Cardiac septum (tissue), 1 donor: ENCODE measurements at regions of chr3 and their contacts with region 1.

Region 1: GRCh38 chr3:21839592-21839991 is 88.6 kb upstream of the ZNF385D start:
- DNase-seq: peak; percentile 75

Region 2: GRCh38 chr3:21792176-21792575 is 47.4 kb before region 1 on chr3:
- intact Hi-C with region 1: loop called (anchors 5 kb)
- DNase-seq: no peak